ENCODE measurements at regions of chr17 and their contacts with region 1.

Region 1: GRCh38 chr17:77096570-77097214 is 44.1 kb upstream of the SEC14L1 start:
- DNase-seq: no peak
- ATAC-seq: peak; percentile 58 to 78
- H3K4me3 ChIP-seq: no peak overlapping the region
- H3K27ac ChIP-seq: peak overlapping the region; percentile 80
- H3K4me1 ChIP-seq: peaks cover 58% of the 10 kb centered on the region
- H3K27me3 ChIP-seq: no peaks in the 10 kb centered on the region
- CTCF ChIP-seq: peak; percentile 60

Region 2: GRCh38 chr17:76252040-76252954 is 844.4 kb before region 1 on chr17:
- intact Hi-C with region 1: no loop called
- DNase-seq: peak; percentile 80
- ATAC-seq: peak; percentile 93 to 94
- H3K4me3 ChIP-seq: no peak overlapping the region
- H3K27ac ChIP-seq: peak overlapping the region; percentile 80
- H3K4me1 ChIP-seq: peaks cover 23% of the 10 kb centered on the region
- H3K27me3 ChIP-seq: no peaks in the 10 kb centered on the region
- CTCF ChIP-seq: no peak

Region 3: GRCh38 chr17:77214743-77215142 is 118.1 kb after region 1 on chr17:
- intact Hi-C with region 1: loop called (anchors 10 kb)
- DNase-seq: no peak
- ATAC-seq: peak; percentile 69 to 70
- H3K4me3 ChIP-seq: no peak overlapping the region
- H3K27ac ChIP-seq: no peak overlapping the region
- H3K4me1 ChIP-seq: peaks cover 22% of the 10 kb centered on the region
- H3K27me3 ChIP-seq: no peaks in the 10 kb centered on the region
- CTCF ChIP-seq: peak; percentile 56

Measured in lower lobe of right lung (tissue), 2 donors.